AG04449 (cell line): ENCODE measurements at regions of chr12 and their contacts with region 1.

Region 1: GRCh38 chr12:53984901-53985709 is at the start of gene HOXC10:
- DNase-seq: peak; percentile 89
- H3K4me3 ChIP-seq: peak within 1 kb of the TSS; percentile 96
- CTCF ChIP-seq: peak; percentile 92

Region 2: GRCh38 chr12:53523131-53523530 is 462.0 kb before region 1 on chr12:
- CTCF ChIA-PET with region 1: no interaction called
- POLR2A ChIA-PET with region 1: no interaction called
- DNase-seq: no peak
- H3K4me3 ChIP-seq: no peak overlapping the region
- CTCF ChIP-seq: no peak

Region 3: DNA sequence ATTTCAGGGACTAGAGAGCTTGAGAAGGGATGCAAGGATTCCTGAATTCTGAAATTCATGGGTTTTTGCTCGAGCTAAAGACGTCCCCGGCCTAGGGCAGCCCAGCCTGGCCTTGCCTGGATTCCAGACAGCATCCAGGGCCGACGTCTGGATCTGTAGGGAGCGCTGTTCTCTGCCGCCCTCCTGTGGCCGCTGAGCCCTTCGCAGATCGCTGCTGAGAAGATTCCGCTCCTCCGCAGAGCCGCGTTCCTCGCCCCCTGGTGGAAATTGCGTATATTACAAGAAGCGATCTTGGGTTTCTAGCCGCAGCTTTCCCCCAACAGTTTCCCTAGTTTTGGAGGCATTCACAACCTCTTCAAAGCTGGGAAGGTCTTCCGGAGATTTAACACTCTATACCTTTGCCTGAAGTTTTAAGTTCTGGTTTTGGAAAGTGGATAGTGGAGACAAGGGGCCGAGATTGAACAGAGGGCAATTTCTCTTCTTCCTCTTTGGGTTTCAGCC is 238.5 kb before region 1 on chr12:
- CTCF ChIA-PET with region 1: interaction called, 40 read pairs
- POLR2A ChIA-PET with region 1: no interaction called
- DNase-seq: no peak
- H3K4me3 ChIP-seq: no peak overlapping the region
- CTCF ChIP-seq: peak; percentile 100

Region 4: GRCh38 chr12:53777936-53778644 is 207.0 kb before region 1 on chr12:
- CTCF ChIA-PET with region 1: no interaction called
- POLR2A ChIA-PET with region 1: no interaction called
- DNase-seq: no peak
- H3K4me3 ChIP-seq: no peak overlapping the region
- CTCF ChIP-seq: no peak

Region 5: GRCh38 chr12:53948650-53949570 is 36.2 kb before region 1 on chr12:
- CTCF ChIA-PET with region 1: no interaction called
- POLR2A ChIA-PET with region 1: no interaction called
- DNase-seq: no peak
- H3K4me3 ChIP-seq: no peak overlapping the region
- CTCF ChIP-seq: no peak

Region 6: GRCh38 chr12:53995378-53996239 is 10.5 kb after region 1 on chr12:
- CTCF ChIA-PET with region 1: interaction called, 249 read pairs
- POLR2A ChIA-PET with region 1: interaction called, 12 read pairs
- DNase-seq: no peak
- H3K4me3 ChIP-seq: peak overlapping the region; percentile 96
- CTCF ChIP-seq: no peak

Region 7: GRCh38 chr12:54017878-54018467 is 32.9 kb after region 1 on chr12:
- CTCF ChIA-PET with region 1: interaction called, 16 read pairs
- POLR2A ChIA-PET with region 1: interaction called, 22 read pairs
- DNase-seq: peak; percentile 82
- H3K4me3 ChIP-seq: peak overlapping the region; percentile 88
- CTCF ChIP-seq: no peak

Region 8: DNA sequence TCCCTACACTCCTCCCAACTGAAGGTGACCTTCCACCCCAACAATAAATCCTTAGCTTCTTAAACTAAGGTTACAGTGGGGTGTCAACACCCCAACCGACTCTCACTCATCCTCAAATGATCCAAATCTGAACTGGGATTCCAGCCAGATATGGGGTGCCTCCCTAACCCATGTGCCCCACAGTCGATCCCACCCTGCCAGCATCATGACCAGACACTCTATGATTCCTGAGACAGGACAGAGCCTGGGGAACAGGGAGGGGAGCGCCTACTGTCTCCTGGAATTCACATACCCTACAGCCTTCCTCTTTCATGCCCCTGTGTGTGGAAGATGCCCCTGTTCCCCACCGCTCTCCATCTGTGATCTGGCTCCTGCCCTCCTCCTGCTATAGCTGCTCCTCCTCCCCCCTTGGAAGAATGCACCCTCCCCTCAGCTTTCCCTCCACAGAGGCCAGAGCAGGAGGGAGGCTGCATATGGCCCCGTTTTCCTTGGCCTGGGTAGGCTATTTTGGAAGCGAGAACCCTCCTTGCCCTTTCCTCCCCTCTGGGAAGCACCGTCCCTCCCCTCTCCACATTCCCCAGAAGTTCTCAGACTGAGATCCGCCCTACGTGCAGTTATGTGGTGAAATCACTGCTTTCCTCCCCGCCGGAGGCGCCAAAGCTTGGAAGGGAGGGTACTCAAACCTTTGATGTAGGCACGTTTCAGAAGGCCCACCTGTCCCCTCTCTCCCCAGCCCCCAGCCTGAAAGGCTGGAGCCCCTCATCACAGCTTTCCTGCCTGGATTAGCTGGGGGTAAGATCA is 155.7 kb after region 1 on chr12:
- CTCF ChIA-PET with region 1: no interaction called
- POLR2A ChIA-PET with region 1: no interaction called
- DNase-seq: peak; percentile 40
- H3K4me3 ChIP-seq: no peak overlapping the region
- CTCF ChIP-seq: no peak

Region 9: GRCh38 chr12:54191550-54192022 is 206.5 kb after region 1 on chr12:
- CTCF ChIA-PET with region 1: interaction called, 401 read pairs
- POLR2A ChIA-PET with region 1: interaction called, 4 read pairs
- DNase-seq: no peak
- H3K4me3 ChIP-seq: no peak overlapping the region
- CTCF ChIP-seq: peak; percentile 81

Region 10: GRCh38 chr12:54220092-54220557 is 235.0 kb after region 1 on chr12:
- CTCF ChIA-PET with region 1: interaction called, 159 read pairs
- POLR2A ChIA-PET with region 1: interaction called, 5 read pairs
- DNase-seq: no peak
- H3K4me3 ChIP-seq: no peak overlapping the region
- CTCF ChIP-seq: peak; percentile 77